PC-3 (cell line): ENCODE measurements at regions of chr1 and their contacts with region 1.

Region 1: DNA sequence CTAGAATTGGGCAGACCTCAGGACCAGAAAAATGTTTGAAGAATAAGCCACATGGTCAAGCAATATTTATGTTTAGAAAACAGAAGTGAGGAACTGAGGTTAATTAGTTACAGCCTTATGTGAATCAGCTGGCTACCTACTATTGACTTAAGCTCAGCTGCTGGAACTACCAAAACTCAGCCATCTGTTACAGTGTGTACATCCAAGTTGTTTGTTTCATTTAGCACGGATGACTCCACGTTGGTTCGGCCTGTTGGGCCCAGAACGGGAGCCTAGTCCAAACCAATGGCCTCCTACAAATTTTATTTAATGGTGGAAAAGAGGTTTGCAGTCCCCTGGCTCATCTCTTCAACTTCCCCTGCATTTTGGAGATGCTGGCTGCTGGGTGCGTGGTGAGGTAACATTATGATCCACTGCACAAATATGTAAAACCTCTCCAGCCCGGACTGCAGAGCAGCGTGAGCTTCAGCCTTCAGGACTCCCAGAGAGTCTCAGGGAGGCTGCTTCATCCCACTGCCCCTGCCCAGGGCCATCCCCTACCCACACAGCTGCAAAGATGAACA is 143.4 kb downstream of the ZZZ3 start:
- DNase-seq: peak; percentile 80
- ATAC-seq: peak; percentile 47
- H3K4me3 ChIP-seq: peak overlapping the region; percentile 42; the same call in 1 of the 2 replicates
- H3K27ac ChIP-seq: peak overlapping the region; percentile 95
- H3K4me1 ChIP-seq: peaks cover 73% of the 10 kb centered on the region
- H3K27me3 ChIP-seq: no peaks in the 10 kb centered on the region
- CTCF ChIP-seq: no peak

Region 2: GRCh38 chr1:77168358-77168757 is 370.7 kb before region 1 on chr1:
- CTCF ChIA-PET with region 1: no interaction called
- POLR2A ChIA-PET with region 1: no interaction called
- intact Hi-C with region 1: loop called (anchors 5 kb)
- DNase-seq: peak; percentile 28
- ATAC-seq: peak; percentile 98
- H3K4me3 ChIP-seq: no peak overlapping the region
- H3K27ac ChIP-seq: 0 out of 2 replicates have a peak overlapping the region, but pooled peaks have one; percentile 1
- H3K4me1 ChIP-seq: no peaks in the 10 kb centered on the region
- H3K27me3 ChIP-seq: no peaks in the 10 kb centered on the region
- CTCF ChIP-seq: no peak

Region 3: GRCh38 chr1:77394166-77394565 is 144.9 kb before region 1 on chr1:
- CTCF ChIA-PET with region 1: no interaction called
- POLR2A ChIA-PET with region 1: no interaction called
- intact Hi-C with region 1: loop called (anchors 2 kb)
- DNase-seq: peak; percentile 85
- ATAC-seq: peak; percentile 84
- H3K4me3 ChIP-seq: peak overlapping the region; percentile 47; the same call in 1 of the 2 replicates
- H3K27ac ChIP-seq: peak overlapping the region; percentile 96
- H3K4me1 ChIP-seq: peaks cover 27% of the 10 kb centered on the region
- H3K27me3 ChIP-seq: no peaks in the 10 kb centered on the region
- CTCF ChIP-seq: no peak

Region 4: GRCh38 chr1:77498918-77499317 is 40.1 kb before region 1 on chr1:
- CTCF ChIA-PET with region 1: interaction called, 10 read pairs
- POLR2A ChIA-PET with region 1: no interaction called
- intact Hi-C with region 1: no loop called
- DNase-seq: no peak
- ATAC-seq: no peak
- H3K4me3 ChIP-seq: no peak overlapping the region
- H3K27ac ChIP-seq: no peak overlapping the region
- H3K4me1 ChIP-seq: no peaks in the 10 kb centered on the region
- H3K27me3 ChIP-seq: no peaks in the 10 kb centered on the region
- CTCF ChIP-seq: no peak